ENCODE measurements at regions of chr22 and their contacts with region 1.

Region 1: DNA sequence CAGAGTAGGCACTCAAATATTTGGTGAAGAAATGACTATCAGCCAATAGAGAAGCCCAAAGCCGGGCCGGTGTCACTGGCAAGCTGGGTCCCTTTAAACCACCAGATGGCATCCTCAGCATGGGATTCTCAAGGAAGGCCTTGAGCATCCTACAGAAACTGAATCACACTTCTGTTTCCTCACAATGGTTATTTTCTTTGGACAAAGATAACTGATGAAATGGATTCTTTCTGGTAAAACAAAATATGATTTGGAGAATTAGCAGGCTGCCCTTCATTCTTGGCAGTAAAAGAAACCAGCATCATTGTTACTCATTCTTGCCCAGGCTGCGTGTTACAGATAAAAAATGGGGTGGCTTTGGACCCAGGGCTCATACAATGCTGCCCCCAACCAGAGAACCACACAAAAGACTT is 30.3 kb upstream of the ASPHD2 start:
- DNase-seq: peak in 1 of 2 donors; percentile 68
- ATAC-seq: peak in 2 of 3 donors; percentile 52 to 61
- H3K4me3 ChIP-seq: no peak overlapping the region
- H3K4me3 Mint-ChIP-seq: no peak overlapping the region
- H3K27ac ChIP-seq: no peak overlapping the region
- H3K27ac Mint-ChIP-seq: no peak overlapping the region
- H3K4me1 ChIP-seq: no peaks in the 10 kb centered on the region
- H3K4me1 Mint-ChIP-seq: no peaks in the 10 kb centered on the region
- H3K27me3 ChIP-seq: no peaks in the 10 kb centered on the region
- H3K27me3 Mint-ChIP-seq: peaks cover 11 to 26% of the 10 kb centered on the region in 2 donors
- CTCF ChIP-seq: peak; percentile 25

Region 2: GRCh38 chr22:24681236-24681635 is 1717.5 kb before region 1 on chr22:
- intact Hi-C with region 1: no loop called
- DNase-seq: no peak
- ATAC-seq: no peak
- H3K4me3 ChIP-seq: no peak overlapping the region
- H3K4me3 Mint-ChIP-seq: no peak overlapping the region
- H3K27ac ChIP-seq: no peak overlapping the region
- H3K27ac Mint-ChIP-seq: no peak overlapping the region
- H3K4me1 ChIP-seq: no peaks in the 10 kb centered on the region
- H3K4me1 Mint-ChIP-seq: no peaks in the 10 kb centered on the region
- H3K27me3 ChIP-seq: peaks cover 8% of the 10 kb centered on the region
- H3K27me3 Mint-ChIP-seq: peaks cover 35 to 44% of the 10 kb centered on the region in 2 donors
- CTCF ChIP-seq: no peak

Region 3: DNA sequence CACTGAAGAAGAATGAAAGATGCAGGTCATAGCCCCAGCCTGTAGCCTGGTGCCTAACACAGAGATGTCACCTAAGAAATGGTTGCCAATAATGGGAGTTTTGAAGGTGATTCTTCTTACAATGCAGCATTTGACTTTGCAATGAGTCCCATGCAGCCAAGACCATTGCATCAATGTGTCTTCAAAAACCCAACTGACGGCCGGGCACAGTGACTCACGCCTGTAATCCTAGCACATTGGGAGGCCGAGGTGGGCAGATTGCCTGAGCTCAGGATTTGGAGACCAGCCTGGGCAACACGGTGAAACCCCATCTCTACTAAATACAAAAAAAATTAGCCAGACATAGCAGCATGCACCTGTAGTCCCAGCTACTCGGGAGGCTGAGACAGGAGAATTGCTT is 59.0 kb before region 1 on chr22:
- intact Hi-C with region 1: no loop called
- DNase-seq: no peak
- ATAC-seq: no peak
- H3K4me3 ChIP-seq: no peak overlapping the region
- H3K4me3 Mint-ChIP-seq: no peak overlapping the region
- H3K27ac ChIP-seq: no peak overlapping the region
- H3K27ac Mint-ChIP-seq: no peak overlapping the region
- H3K4me1 ChIP-seq: no peaks in the 10 kb centered on the region
- H3K4me1 Mint-ChIP-seq: no peaks in the 10 kb centered on the region
- H3K27me3 ChIP-seq: no peaks in the 10 kb centered on the region
- H3K27me3 Mint-ChIP-seq: peaks cover 30 to 36% of the 10 kb centered on the region in 2 donors
- CTCF ChIP-seq: no peak

Region 4: DNA sequence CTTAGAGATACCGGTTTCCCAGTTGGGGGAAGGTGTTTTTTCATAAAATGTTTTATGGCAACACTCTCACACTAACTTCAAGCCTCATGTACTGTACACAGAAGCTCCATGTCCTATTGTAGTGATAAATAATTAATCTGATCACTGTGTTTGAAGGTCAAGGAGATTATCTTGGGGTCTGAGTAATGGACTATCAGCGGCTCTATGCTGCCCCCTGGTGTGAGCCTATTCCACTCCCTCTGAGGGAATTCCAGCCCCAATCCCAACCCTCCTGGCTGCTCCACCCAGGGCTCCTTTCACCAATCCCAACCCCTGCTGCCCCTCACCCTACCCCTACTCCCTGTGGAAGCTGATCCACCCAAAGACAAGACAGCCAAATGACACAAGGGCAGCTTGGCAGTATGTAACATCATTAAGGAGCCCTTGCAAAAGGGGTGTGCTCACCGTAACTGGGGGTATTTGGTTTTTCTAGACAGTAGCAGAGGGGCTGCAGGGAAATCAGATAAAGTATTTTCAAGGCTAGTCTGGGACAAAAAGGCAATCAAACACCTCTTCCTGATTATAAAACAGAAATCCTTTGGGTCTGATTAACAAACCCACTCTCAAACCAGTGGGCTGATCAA is 62.6 kb after region 1 on chr22:
- intact Hi-C with region 1: loop called (anchors 2 kb)
- DNase-seq: peak in 1 of 2 donors; percentile 63
- ATAC-seq: peak in 1 of 3 donors; percentile 58
- H3K4me3 ChIP-seq: no peak overlapping the region
- H3K4me3 Mint-ChIP-seq: no peak overlapping the region
- H3K27ac ChIP-seq: no peak overlapping the region
- H3K27ac Mint-ChIP-seq: no peak overlapping the region
- H3K4me1 ChIP-seq: no peaks in the 10 kb centered on the region
- H3K4me1 Mint-ChIP-seq: no peaks in the 10 kb centered on the region
- H3K27me3 ChIP-seq: no peaks in the 10 kb centered on the region
- H3K27me3 Mint-ChIP-seq: no peaks in the 10 kb centered on the region
- CTCF ChIP-seq: peak; percentile 55